ENCODE measurements at regions of chr15 and their contacts with region 1.

Region 1: GRCh38 chr15:76973362-76973743 is 21.6 kb upstream of the PSTPIP1 start:
- DNase-seq: peak; percentile 82
- H3K4me3 Mint-ChIP-seq: no peak overlapping the region
- H3K27ac Mint-ChIP-seq: no peak overlapping the region
- H3K4me1 Mint-ChIP-seq: peaks cover 18% of the 10 kb centered on the region
- H3K27me3 Mint-ChIP-seq: no peaks in the 10 kb centered on the region

Region 2: DNA sequence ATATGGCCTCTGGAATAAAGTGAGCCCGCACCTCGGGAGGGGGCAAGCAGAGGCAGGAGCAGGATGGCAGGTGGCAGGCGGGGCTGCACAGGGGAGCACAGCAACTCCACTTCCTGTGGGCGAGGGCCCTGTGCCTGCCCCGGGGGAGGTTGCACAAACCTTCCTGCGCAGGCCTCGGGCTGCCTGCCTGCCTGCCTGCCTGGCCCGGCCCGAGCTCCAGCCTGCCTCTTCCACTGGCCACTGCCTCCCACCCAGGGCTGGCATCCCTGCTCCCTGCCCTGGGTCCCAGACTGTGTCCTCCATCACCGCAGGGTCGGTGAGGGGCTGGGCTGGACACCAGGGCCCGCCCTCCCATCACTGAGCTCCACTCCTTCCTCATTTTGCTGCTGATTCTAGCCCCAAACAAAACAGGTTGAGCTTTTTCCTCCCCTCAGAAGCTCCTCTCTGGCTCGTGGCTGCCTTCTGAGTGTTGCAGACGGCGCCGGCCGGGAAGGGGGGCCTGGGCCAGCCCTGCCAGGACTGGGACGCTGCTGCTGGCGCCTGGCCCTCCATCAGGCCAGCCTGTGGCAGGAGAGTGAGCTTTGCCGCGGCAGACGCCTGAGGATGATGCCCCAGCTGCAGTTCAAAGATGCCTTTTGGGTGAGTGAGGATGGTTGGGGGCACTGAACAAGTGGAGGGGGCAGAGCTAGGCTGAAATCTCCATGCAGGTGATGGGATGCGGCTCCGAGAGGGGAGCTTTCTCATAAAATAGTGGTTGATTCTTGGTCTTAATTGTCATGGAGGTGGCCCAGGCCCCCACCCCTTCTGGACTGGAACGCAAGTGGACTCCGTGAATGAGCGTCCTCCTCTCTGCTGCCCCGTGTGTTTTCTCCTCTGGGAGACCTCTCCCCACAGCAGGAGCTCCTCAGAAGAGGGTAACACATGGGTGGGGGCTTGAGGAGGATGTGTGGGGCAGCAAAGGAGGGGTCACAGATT is 21.9 kb after region 1 on chr15 and contains the start of gene PSTPIP1:
- CTCF ChIA-PET with region 1: interaction called, 30 read pairs
- POLR2A ChIA-PET with region 1: interaction called, 5 read pairs
- intact Hi-C with region 1: loop called (anchors 2 kb)
- DNase-seq: peak; percentile 83
- H3K4me3 Mint-ChIP-seq: peak within 1 kb of the TSS; percentile 92
- H3K27ac Mint-ChIP-seq: peak within 1 kb of the TSS; percentile 99
- H3K4me1 Mint-ChIP-seq: peaks cover 60% of the 10 kb centered on the region
- H3K27me3 Mint-ChIP-seq: no peaks in the 10 kb centered on the region
- total RNA-seq, gene PSTPIP1: 155 to 164 TPM

Region 3: GRCh38 chr15:77013776-77014131 is 40.4 kb after region 1 on chr15:
- CTCF ChIA-PET with region 1: interaction called, 17 read pairs
- POLR2A ChIA-PET with region 1: no interaction called
- intact Hi-C with region 1: loop called (anchors 2 kb)
- DNase-seq: peak; percentile 95
- H3K4me3 Mint-ChIP-seq: peak overlapping the region; percentile 73
- H3K27ac Mint-ChIP-seq: peak overlapping the region; percentile 83
- H3K4me1 Mint-ChIP-seq: peaks cover 87% of the 10 kb centered on the region
- H3K27me3 Mint-ChIP-seq: peaks cover 1% of the 10 kb centered on the region

Region 4: DNA sequence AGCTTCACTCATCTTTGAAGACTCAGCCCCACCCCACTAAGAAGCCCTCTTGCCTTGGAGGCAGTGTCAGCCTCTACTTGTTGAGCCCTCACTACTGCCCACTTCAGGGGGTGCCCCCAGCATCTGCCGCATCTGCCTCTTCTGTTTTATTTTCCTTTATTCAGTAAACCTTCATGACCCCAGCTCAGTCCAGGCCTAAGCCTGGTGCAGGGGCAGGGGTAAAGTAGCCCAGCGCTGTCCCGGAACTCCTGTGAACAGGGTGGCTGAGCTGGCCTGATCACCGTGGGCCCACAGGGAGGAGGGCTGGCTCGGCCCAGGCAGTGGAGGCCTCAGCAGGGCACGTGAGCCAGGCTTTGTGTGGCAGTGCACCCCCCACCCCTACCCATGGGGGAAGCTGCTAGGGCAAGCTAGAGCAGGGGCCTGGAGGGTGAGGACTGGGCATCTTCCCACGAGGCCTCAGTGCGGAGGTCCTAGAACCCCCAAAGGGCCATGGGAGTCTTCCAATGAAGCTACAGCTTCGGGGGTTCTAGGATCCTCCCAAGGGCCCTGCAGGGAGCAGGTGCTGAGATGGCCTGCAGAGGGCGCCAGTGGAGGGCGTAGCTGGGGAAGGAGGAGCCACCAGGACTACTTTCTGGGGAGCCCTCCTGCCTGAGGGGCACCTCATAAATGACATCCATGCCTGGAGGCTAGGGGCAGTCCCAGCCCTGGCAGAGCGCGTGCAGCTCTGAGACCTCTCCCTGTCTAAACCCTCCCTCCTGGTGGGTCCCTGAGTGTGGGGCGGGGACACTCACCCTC is 61.5 kb after region 1 on chr15:
- CTCF ChIA-PET with region 1: interaction called, 32 read pairs
- POLR2A ChIA-PET with region 1: no interaction called
- intact Hi-C with region 1: no loop called
- DNase-seq: peak; percentile 54
- H3K4me3 Mint-ChIP-seq: no peak overlapping the region
- H3K27ac Mint-ChIP-seq: peak overlapping the region; percentile 56
- H3K4me1 Mint-ChIP-seq: no peaks in the 10 kb centered on the region
- H3K27me3 Mint-ChIP-seq: no peaks in the 10 kb centered on the region

Region 5: DNA sequence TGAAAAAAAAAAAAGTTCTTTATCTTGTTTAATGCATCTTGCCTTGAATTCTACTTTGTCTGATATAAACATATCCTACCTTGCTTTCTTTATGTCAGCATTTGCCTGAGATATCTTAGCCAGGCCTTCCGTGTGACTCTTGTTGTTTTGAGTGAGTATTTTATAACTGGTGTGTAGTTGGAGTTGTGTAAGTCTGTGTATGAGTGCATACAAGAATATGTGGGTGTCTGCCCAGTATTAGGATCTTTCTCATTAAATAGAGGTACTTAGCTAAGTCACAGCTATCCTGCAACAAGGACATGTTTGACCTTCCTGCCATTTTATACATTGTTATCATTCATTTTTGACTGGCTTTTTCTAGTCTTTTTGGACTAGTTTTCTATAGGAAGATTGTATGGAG is 120.1 kb after region 1 on chr15:
- CTCF ChIA-PET with region 1: interaction called, 10 read pairs
- POLR2A ChIA-PET with region 1: no interaction called
- intact Hi-C with region 1: no loop called
- DNase-seq: no peak
- H3K4me3 Mint-ChIP-seq: no peak overlapping the region
- H3K27ac Mint-ChIP-seq: no peak overlapping the region
- H3K4me1 Mint-ChIP-seq: no peaks in the 10 kb centered on the region
- H3K27me3 Mint-ChIP-seq: no peaks in the 10 kb centered on the region

Region 6: DNA sequence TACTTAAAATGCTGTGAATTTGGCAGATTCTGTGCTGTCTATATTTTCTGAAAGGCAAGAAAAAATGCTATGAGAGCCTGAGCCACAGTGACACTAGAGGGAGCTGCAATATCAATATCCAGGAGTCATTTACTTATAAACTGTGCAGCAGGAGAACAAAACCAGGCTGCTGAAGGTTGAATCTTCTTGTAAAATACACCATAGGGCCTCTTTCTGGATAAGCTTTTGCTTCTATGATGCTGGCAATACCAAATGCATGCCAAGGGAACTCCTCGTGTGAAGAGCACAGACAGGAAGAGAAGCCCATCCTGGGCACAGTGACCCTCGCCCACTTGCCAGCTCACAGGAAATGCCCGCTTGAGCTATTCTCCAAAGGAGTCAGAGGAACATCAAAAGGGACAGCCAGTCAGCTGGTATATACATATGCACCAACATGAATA is 145.5 kb after region 1 on chr15:
- CTCF ChIA-PET with region 1: interaction called, 13 read pairs
- POLR2A ChIA-PET with region 1: no interaction called
- intact Hi-C with region 1: loop called (anchors 5 kb)
- DNase-seq: peak; percentile 42
- H3K4me3 Mint-ChIP-seq: no peak overlapping the region
- H3K27ac Mint-ChIP-seq: no peak overlapping the region
- H3K4me1 Mint-ChIP-seq: peaks cover 5% of the 10 kb centered on the region
- H3K27me3 Mint-ChIP-seq: no peaks in the 10 kb centered on the region

Region 7: GRCh38 chr15:77282333-77282732 is 309.0 kb after region 1 on chr15:
- CTCF ChIA-PET with region 1: no interaction called
- POLR2A ChIA-PET with region 1: no interaction called
- intact Hi-C with region 1: no loop called
- DNase-seq: no peak
- H3K4me3 Mint-ChIP-seq: no peak overlapping the region
- H3K27ac Mint-ChIP-seq: no peak overlapping the region
- H3K4me1 Mint-ChIP-seq: no peaks in the 10 kb centered on the region
- H3K27me3 Mint-ChIP-seq: no peaks in the 10 kb centered on the region

Region 8: GRCh38 chr15:77543159-77543882 is 570.0 kb after region 1 on chr15:
- CTCF ChIA-PET with region 1: interaction called, 26 read pairs
- POLR2A ChIA-PET with region 1: no interaction called
- intact Hi-C with region 1: loop called (anchors 10 kb)
- DNase-seq: peak; percentile 82
- H3K4me3 Mint-ChIP-seq: peak overlapping the region; percentile 73
- H3K27ac Mint-ChIP-seq: no peak overlapping the region
- H3K4me1 Mint-ChIP-seq: peaks cover 8% of the 10 kb centered on the region
- H3K27me3 Mint-ChIP-seq: peaks cover 1% of the 10 kb centered on the region

Measured in activated CD4-positive, alpha-beta memory T cell treated with anti-CD3 and anti-CD28 coated beads for 36 hours (primary cell).